HEK293 (cell line): ENCODE measurements at regions of chr10 and their contacts with region 1.

Region 1: GRCh38 chr10:70363971-70364771 is 18.3 kb downstream of the LRRC20 start:
- H3K4me3 ChIP-seq: no peak overlapping the region
- H3K27ac ChIP-seq: no peak overlapping the region
- H3K4me1 ChIP-seq: no peaks in the 10 kb centered on the region; the same call in 1 of the 2 replicates
- CTCF ChIP-seq: peak; percentile 96

Region 2: GRCh38 chr10:70146489-70147258 is 217.5 kb before region 1 on chr10 and contains the start of gene TYSND1:
- CTCF ChIA-PET with region 1: interaction called, 20 read pairs
- POLR2A ChIA-PET with region 1: interaction called, 21 read pairs
- H3K4me3 ChIP-seq: peak within 1 kb of the TSS; percentile 64
- H3K27ac ChIP-seq: peak within 1 kb of the TSS; percentile 84
- H3K4me1 ChIP-seq: peaks cover 6% of the 10 kb centered on the region; the same call in 1 of the 2 replicates
- CTCF ChIP-seq: peak; percentile 95

Region 3: DNA sequence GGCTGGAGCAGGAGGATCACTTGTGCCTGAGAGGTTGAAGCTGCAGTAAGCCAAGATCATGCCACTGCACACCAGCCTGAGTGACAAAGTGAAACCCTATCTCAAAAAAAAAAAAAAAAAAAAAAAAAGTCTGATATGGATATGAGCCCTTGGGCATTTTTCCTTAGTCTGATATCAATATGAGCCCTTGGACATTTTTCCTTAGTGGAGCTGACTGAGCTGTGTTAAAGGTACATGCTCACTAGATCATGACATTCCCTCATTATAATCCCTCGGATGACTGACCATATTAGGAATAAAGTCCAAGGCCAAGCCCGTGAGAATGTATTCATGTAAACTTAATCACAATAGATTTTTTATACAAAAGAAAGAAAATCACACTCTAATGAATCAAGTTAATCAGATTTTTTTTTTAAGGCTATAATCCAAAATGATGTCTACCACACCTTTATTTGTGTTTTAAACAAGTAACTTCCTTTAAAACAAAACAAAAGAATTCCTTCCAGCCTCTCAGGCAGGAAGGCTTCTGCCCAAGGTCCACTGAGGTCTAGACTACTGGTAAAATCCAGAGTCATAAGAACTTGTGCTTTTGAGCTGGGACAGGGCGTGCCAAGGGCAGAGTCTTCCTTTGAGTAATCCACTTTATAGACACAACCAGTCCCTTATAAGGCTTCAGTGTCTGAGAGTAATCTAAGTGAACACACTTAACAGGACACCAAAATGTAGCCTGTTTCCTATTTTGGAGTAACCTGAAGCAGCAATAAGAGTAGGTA is 136.4 kb before region 1 on chr10:
- CTCF ChIA-PET with region 1: interaction called, 177 read pairs
- POLR2A ChIA-PET with region 1: interaction called, 4 read pairs
- H3K4me3 ChIP-seq: no peak overlapping the region
- H3K27ac ChIP-seq: no peak overlapping the region
- H3K4me1 ChIP-seq: no peaks in the 10 kb centered on the region
- CTCF ChIP-seq: no peak

Region 4: GRCh38 chr10:70343312-70343711 is 20.9 kb before region 1 on chr10:
- CTCF ChIA-PET with region 1: interaction called, 47 read pairs
- POLR2A ChIA-PET with region 1: no interaction called
- H3K4me3 ChIP-seq: no peak overlapping the region
- H3K27ac ChIP-seq: no peak overlapping the region
- H3K4me1 ChIP-seq: no peaks in the 10 kb centered on the region
- CTCF ChIP-seq: no peak

Region 5: GRCh38 chr10:70376436-70377378 is 12.5 kb after region 1 on chr10:
- CTCF ChIA-PET with region 1: interaction called, 22 read pairs
- POLR2A ChIA-PET with region 1: interaction called, 7 read pairs
- H3K4me3 ChIP-seq: no peak overlapping the region
- H3K27ac ChIP-seq: no peak overlapping the region
- H3K4me1 ChIP-seq: peaks cover 3% of the 10 kb centered on the region; the same call in 1 of the 2 replicates
- CTCF ChIP-seq: no peak